Activated CD4-positive, alpha-beta T cell treated with anti-CD3 and anti-CD28 coated beads for 36 hours (primary cell): ENCODE measurements at regions of chr1 and their contacts with region 1.

Region 1: GRCh38 chr1:35451125-35451528 is 106.1 kb downstream of the KIAA0319L start:
- DNase-seq: peak; percentile 89
- ATAC-seq: peak; percentile 68
- H3K4me3 Mint-ChIP-seq: no peak overlapping the region
- H3K27ac Mint-ChIP-seq: peak overlapping the region; percentile 74
- H3K4me1 Mint-ChIP-seq: peaks cover 41% of the 10 kb centered on the region
- H3K27me3 Mint-ChIP-seq: no peaks in the 10 kb centered on the region

Region 2: DNA sequence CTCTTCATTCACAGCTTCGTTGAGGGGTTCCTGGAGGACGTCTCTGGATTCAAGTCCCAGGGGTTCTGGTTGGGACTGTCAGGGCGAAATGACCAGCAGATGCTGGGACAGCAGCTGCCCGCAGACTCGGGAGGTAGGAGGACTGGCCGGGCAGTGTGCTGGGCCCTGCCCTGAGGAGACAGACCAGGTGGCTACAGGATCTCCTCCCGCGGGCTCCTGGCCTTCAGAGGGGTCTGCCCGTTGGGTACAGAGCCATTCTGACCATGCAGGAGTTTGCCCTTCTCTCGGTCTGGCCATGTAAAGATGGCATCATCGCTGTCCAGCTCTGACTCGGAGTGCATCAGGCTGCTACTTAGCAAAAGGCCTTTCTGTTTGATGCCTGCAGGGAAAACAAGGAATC is 16.4 kb before region 1 on chr1:
- CTCF ChIA-PET with region 1: interaction called, 47 read pairs
- POLR2A ChIA-PET with region 1: interaction called, 4 read pairs
- intact Hi-C with region 1: no loop called
- DNase-seq: no peak
- ATAC-seq: no peak
- H3K4me3 Mint-ChIP-seq: no peak overlapping the region
- H3K27ac Mint-ChIP-seq: no peak overlapping the region
- H3K4me1 Mint-ChIP-seq: peaks cover 21% of the 10 kb centered on the region
- H3K27me3 Mint-ChIP-seq: no peaks in the 10 kb centered on the region

Region 3: GRCh38 chr1:35505908-35506798 is 55.0 kb after region 1 on chr1:
- CTCF ChIA-PET with region 1: interaction called, 13 read pairs
- POLR2A ChIA-PET with region 1: no interaction called
- intact Hi-C with region 1: loop called in 1 of 2 experiments (anchors 5 kb)
- DNase-seq: peak; percentile 62
- ATAC-seq: peak; percentile 80
- H3K4me3 Mint-ChIP-seq: peak overlapping the region; percentile 26
- H3K27ac Mint-ChIP-seq: peak overlapping the region; percentile 81
- H3K4me1 Mint-ChIP-seq: peaks cover 61% of the 10 kb centered on the region
- H3K27me3 Mint-ChIP-seq: no peaks in the 10 kb centered on the region

Region 4: DNA sequence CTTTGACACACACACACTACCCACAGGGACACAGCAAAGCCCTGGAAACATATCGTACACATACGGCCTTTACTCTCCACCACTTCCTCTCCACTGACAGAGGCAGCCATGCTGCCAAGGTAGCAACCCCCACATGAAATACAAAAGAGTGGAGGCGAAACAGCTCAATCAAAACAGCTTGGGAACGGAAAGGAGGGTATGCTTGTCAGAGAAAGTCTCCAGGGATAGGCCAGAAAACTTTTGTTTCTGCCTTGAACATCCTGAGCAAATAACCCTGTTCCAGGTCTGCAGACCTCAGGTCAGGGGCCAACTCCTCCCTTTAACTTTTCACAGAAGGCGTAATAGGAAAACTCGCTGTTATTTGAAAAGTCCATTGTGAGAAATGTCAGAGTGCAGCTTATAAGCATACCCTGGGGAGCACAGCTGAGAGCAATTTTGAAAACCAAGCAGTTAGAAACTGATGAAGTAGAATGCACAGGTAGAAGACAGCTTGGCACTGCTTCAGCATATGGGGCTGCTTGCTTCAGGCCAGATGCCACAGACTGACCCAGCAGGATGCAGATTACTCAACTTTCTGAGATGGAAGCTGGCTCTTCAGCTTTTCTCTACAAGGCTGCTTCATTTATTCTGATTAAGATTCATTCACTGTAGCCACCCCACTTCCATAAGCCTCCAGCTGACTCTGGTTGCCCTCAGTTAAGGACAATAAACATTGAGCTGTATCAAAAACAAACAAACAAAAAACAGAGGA is 88.1 kb after region 1 on chr1:
- CTCF ChIA-PET with region 1: interaction called, 54 read pairs
- POLR2A ChIA-PET with region 1: interaction called, 3 read pairs
- intact Hi-C with region 1: no loop called
- DNase-seq: peak; percentile 48
- ATAC-seq: peak; percentile 76
- H3K4me3 Mint-ChIP-seq: peak overlapping the region; percentile 45
- H3K27ac Mint-ChIP-seq: peak overlapping the region; percentile 92
- H3K4me1 Mint-ChIP-seq: peaks cover 87% of the 10 kb centered on the region
- H3K27me3 Mint-ChIP-seq: no peaks in the 10 kb centered on the region

Region 5: GRCh38 chr1:35564037-35564883 is 113.1 kb after region 1 on chr1:
- CTCF ChIA-PET with region 1: interaction called, 118 read pairs
- POLR2A ChIA-PET with region 1: interaction called, 4 read pairs
- intact Hi-C with region 1: loop called (anchors 1 kb)
- DNase-seq: peak; percentile 91
- ATAC-seq: peak; percentile 87
- H3K4me3 Mint-ChIP-seq: no peak overlapping the region
- H3K27ac Mint-ChIP-seq: no peak overlapping the region
- H3K4me1 Mint-ChIP-seq: peaks cover 28% of the 10 kb centered on the region
- H3K27me3 Mint-ChIP-seq: no peaks in the 10 kb centered on the region

Region 6: GRCh38 chr1:35708952-35709351 is 257.8 kb after region 1 on chr1:
- CTCF ChIA-PET with region 1: no interaction called
- POLR2A ChIA-PET with region 1: no interaction called
- intact Hi-C with region 1: no loop called
- DNase-seq: no peak
- ATAC-seq: no peak
- H3K4me3 Mint-ChIP-seq: peak overlapping the region; percentile 49
- H3K27ac Mint-ChIP-seq: no peak overlapping the region
- H3K4me1 Mint-ChIP-seq: peaks cover 18% of the 10 kb centered on the region
- H3K27me3 Mint-ChIP-seq: peaks cover 22% of the 10 kb centered on the region

Region 7: DNA sequence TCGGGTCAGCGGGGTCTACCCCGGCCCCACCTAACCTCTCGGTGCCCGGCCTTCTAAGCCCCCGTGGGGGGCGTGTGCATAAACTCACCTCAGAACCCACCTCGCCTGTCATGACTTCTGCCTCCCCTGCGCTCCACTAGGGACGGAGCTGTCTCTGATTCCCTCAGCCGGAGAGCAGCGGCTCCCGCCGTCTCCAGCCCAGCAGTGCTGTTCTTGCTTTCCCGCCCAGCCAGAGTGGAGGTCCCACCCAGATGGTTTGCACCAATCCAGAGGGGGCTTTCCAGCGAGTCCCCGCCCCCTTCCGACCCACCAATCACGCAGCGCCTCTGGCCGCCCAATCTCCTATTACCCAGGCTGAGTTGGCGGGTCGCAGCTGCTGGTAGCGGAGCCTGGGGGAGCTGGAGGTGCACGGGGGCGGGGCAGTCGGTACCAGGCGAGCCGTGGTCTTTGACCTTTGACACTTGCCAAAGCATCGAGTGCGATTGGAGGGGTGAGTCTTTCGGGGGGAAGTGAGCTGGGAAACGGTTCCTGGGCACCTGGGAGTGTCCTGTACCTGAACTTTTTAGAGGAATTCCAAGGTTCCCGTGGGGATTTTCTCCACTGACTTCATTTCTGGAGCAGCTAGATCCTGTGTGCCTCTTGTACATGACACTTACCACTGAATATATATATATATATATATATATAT is 318.8 kb after region 1 on chr1 and contains the start of gene CLSPN:
- CTCF ChIA-PET with region 1: interaction called, 20 read pairs
- POLR2A ChIA-PET with region 1: interaction called, 3 read pairs
- intact Hi-C with region 1: loop called (anchors 2 to 5 kb)
- DNase-seq: peak; percentile 98
- ATAC-seq: peak; percentile 98
- H3K4me3 Mint-ChIP-seq: peak within 1 kb of the TSS; percentile 91
- H3K27ac Mint-ChIP-seq: peak within 1 kb of the TSS; percentile 97
- H3K4me1 Mint-ChIP-seq: peaks cover 6% of the 10 kb centered on the region
- H3K27me3 Mint-ChIP-seq: no peaks in the 10 kb centered on the region
- total RNA-seq, gene CLSPN: 45.7 to 57.8 TPM

Region 8: DNA sequence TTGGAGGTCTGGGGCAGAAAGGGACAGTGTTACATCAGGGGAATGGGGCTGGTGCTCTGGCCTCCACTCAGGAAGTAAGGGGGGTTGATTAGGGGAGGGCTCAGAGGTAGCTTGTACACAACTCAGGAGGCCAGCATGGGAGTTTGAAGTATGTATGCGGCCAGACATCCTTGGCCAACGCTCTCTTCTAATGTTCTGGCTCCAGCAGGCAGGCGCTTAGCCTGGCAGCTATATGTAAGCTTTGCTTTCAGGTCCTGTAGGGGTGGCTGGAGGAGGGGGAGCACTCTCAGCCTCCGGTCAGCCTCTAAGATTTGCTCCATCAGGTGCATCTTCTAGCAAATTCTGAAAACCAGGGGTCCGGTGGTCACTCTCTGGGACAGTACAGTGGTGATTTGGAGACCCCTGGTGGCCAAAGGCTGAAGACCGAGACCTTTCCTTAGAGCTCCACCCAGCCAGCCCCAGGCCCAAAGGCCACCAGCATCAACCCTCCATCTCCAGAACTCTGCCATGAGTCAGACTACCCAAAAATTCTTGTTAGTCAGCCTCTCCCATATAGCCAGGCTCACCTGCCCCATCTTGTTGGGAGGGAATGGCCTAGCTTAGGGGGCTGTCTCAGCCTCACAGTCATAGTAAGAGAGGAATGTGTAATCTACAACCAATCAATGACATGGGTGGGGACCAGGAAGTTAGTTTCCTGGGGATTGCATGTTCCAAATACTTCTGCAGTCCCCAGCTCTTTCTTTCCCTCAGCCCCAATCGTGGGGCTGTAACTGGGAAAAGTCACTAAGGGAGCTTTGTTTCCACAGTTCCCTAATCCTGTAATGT is 683.6 kb after region 1 on chr1:
- CTCF ChIA-PET with region 1: no interaction called
- POLR2A ChIA-PET with region 1: no interaction called
- intact Hi-C with region 1: no loop called
- DNase-seq: peak; percentile 71
- ATAC-seq: peak; percentile 73
- H3K4me3 Mint-ChIP-seq: no peak overlapping the region
- H3K27ac Mint-ChIP-seq: no peak overlapping the region
- H3K4me1 Mint-ChIP-seq: peaks cover 4% of the 10 kb centered on the region
- H3K27me3 Mint-ChIP-seq: no peaks in the 10 kb centered on the region